H1 (cell line): ENCODE measurements at regions of chr17 and their contacts with region 1.

Region 1: GRCh38 chr17:63946440-63947367 is 14.6 kb upstream of the CD79B start:
- DNase-seq: peak in 1 of 2 experiments; percentile 85
- H3K4me3 ChIP-seq: no peak overlapping the region
- H3K27ac ChIP-seq: no peak overlapping the region
- H3K4me1 ChIP-seq: peaks cover 0 to 8% (median 1%) of the 10 kb centered on the region in 4 experiments; a peak in 3 of 7 replicates
- H3K27me3 ChIP-seq: no peaks in the 10 kb centered on the region
- CTCF ChIP-seq: peak; percentile 75 to 92 (median 81)
- EP300 ChIP-seq: no peak
- POLR2A ChIP-seq: no peak
- RAD21 ChIP-seq: peak; percentile 64 to 71

Region 2: GRCh38 chr17:63809970-63810369 is 136.7 kb before region 1 on chr17:
- CTCF ChIA-PET with region 1: no interaction called
- POLR2A ChIA-PET with region 1: no interaction called
- DNase-seq: no peak
- H3K4me3 ChIP-seq: no peak overlapping the region
- H3K27ac ChIP-seq: no peak overlapping the region
- H3K4me1 ChIP-seq: no peaks in the 10 kb centered on the region
- H3K27me3 ChIP-seq: no peaks in the 10 kb centered on the region
- CTCF ChIP-seq: no peak
- EP300 ChIP-seq: no peak
- POLR2A ChIP-seq: no peak
- RAD21 ChIP-seq: no peak

Region 3: DNA sequence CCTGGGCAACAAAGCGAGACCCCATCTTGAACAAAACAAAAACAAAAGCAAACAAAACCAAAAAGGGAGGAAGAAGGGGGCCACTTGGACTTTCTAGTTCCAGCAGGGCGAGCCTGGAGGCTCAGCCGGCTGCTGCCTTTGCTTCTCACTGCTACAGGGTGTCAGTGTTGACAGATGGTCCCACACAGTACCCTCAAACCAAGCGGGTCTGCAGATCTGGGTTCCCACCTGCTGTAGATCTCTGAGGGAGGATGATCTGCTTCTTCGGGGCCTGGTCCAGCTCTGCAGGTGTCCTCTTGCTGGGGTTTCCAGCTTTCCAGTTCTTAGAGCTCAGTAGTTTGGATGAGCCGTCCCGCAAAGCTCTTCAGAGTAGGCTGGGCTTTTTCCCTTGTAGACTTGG is 42.4 kb before region 1 on chr17:
- CTCF ChIA-PET with region 1: interaction called, 45 read pairs
- POLR2A ChIA-PET with region 1: no interaction called
- DNase-seq: no peak
- H3K4me3 ChIP-seq: no peak overlapping the region
- H3K27ac ChIP-seq: no peak overlapping the region
- H3K4me1 ChIP-seq: peaks cover 0 to 4% (median under 1%) of the 10 kb centered on the region in 4 experiments; a peak in 2 of 7 replicates
- H3K27me3 ChIP-seq: no peaks in the 10 kb centered on the region
- CTCF ChIP-seq: no peak
- EP300 ChIP-seq: no peak
- POLR2A ChIP-seq: no peak
- RAD21 ChIP-seq: no peak

Region 4: DNA sequence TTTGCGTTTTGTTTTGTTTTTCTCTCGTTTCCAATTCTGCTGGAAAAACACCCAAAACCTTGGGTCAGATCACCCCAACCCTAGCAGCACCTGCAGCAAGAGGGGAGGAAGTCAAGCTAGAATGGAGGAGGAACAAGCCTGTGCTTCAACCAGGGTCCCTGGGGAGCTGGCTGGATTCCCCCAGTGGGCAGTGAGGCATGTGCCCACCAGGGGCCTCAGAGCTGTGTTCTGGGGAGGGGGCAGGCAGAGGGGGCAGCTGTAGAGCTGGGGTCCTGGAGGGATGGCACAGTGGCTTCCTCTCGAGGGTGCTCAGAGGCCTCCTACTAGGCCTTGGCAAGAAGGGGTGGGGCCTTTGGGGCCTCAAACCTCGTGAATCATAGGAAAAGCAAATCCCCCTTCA is 21.1 kb before region 1 on chr17:
- CTCF ChIA-PET with region 1: interaction called, 270 read pairs
- POLR2A ChIA-PET with region 1: interaction called, 13 read pairs
- DNase-seq: no peak
- H3K4me3 ChIP-seq: no peak overlapping the region
- H3K27ac ChIP-seq: no peak overlapping the region
- H3K4me1 ChIP-seq: peaks cover 0 to 2% (median under 1%) of the 10 kb centered on the region in 4 experiments; a peak in 4 of 7 replicates
- H3K27me3 ChIP-seq: no peaks in the 10 kb centered on the region
- CTCF ChIP-seq: no peak
- EP300 ChIP-seq: no peak
- POLR2A ChIP-seq: no peak
- RAD21 ChIP-seq: no peak

Region 5: GRCh38 chr17:63961355-63962212 is 14.9 kb after region 1 on chr17:
- CTCF ChIA-PET with region 1: interaction called, 36 read pairs
- POLR2A ChIA-PET with region 1: interaction called, 19 read pairs
- DNase-seq: peak; percentile 100
- H3K4me3 ChIP-seq: peak overlapping the region; percentile 29 to 62 (median 50); a peak in 7 of 8 replicates
- H3K27ac ChIP-seq: peak overlapping the region; percentile 37; the same call in 1 of the 2 replicates
- H3K4me1 ChIP-seq: peaks cover 0 to 20% (median 9%) of the 10 kb centered on the region in 4 experiments; a peak in 6 of 7 replicates
- H3K27me3 ChIP-seq: no peaks in the 10 kb centered on the region
- CTCF ChIP-seq: no peak
- EP300 ChIP-seq: peak in 1 of 2 experiments; percentile 56; a peak in 1 of 3 replicates
- POLR2A ChIP-seq: peak in 1 of 2 experiments; percentile 65; a peak in 2 of 3 replicates
- RAD21 ChIP-seq: no peak

Region 6: DNA sequence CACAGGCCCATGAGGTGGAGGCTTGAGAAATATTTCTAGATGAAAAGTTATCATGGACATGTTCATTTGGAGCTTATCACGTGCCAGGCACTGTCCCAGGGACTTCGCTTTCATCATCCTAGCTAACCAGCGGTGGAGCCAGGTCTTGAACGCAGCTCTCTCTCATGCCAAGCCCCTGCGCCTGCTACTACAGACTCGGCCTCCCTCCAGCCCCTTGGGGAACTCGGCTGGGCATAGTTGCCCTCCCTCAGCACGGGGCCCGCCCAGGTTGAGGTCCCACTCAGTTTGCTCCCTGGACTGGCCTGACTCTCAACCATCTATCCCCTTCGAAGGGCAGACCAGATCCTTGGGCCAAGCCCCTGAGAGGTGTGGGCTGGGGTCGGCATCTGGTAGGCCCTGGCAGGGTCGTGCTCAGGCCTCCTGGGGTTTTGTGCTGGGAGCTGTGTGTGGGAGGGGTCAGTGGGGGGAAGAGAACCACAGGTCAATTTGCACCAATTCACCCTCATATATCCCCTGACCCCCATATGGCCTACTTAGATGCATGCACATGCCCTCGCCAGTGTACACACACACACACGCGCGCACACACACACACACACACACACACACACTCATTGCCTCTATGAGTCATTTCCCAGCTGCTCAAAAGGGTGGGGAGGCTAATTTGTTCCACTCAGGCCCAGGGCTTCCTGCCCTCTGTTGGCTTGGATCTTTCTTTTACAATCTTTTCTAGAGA is 38.1 kb after region 1 on chr17:
- CTCF ChIA-PET with region 1: interaction called, 219 read pairs
- POLR2A ChIA-PET with region 1: interaction called, 6 read pairs
- DNase-seq: no peak
- H3K4me3 ChIP-seq: no peak overlapping the region
- H3K27ac ChIP-seq: no peak overlapping the region
- H3K4me1 ChIP-seq: peaks cover 0 to 17% (median 9%) of the 10 kb centered on the region in 4 experiments; a peak in 6 of 7 replicates
- H3K27me3 ChIP-seq: no peaks in the 10 kb centered on the region; a peak in 1 of 7 replicates
- CTCF ChIP-seq: no peak
- EP300 ChIP-seq: no peak
- POLR2A ChIP-seq: no peak
- RAD21 ChIP-seq: no peak

Region 7: DNA sequence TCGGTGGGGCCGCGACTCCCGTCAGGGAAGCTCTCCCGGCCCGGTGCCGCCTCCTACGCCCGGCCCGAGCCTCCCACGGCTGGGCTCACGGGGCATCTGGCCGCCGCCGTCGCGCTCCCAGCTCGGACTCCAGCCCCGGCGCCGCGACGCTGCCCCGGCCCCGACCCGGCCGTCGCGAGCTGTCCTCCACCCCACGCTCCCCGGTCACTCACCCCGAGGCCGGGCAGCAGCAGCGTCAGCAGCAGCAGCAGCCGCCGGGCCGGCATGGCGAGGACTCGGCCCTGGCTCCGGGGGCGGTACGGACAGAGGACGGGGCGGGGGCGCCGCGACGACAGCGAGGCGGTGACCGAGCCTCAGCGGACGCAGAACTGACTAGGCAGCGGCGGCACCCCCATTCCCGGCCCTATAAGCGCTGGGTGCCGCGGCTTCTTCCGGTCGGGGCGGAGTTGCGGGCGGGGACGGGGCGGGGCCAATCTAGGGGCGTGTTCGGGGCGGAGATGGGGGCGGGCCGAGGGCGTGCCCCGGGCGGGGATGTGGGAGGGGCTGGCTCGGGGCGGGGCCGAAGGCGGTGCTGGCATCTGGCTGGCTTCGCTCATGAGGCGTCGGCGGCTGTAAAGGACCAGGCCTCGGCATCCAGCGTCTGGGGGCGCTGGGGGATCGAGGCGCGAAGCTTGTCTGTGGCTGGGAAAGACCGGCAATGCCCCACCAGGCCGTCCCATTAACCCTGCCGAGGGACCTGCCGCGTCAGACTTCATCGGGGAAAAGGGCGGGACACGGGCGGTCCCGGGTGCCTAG is 183.3 kb after region 1 on chr17 and contains the start of gene ERN1:
- CTCF ChIA-PET with region 1: interaction called, 10 read pairs
- POLR2A ChIA-PET with region 1: no interaction called
- DNase-seq: peak; percentile 81 to 91
- H3K4me3 ChIP-seq: peak within 1 kb of the TSS; percentile 69 to 79 (median 74)
- H3K27ac ChIP-seq: no peak within 1 kb of the TSS
- H3K4me1 ChIP-seq: no peaks in the 10 kb centered on the region
- H3K27me3 ChIP-seq: peaks cover 0 to 21% (median 11%) of the 10 kb centered on the region in 4 experiments; a peak in 6 of 7 replicates
- CTCF ChIP-seq: 0 out of 4 replicates have a peak, but pooled peaks of 1 of the 3 experiments have one; percentile 11
- EP300 ChIP-seq: no peak
- POLR2A ChIP-seq: peak; percentile 75 to 76
- RAD21 ChIP-seq: peak in 1 of 2 experiments; percentile 5; a peak in 1 of 4 replicates
- total RNA-seq, gene ERN1: 3.9 and 5.7 TPM in 2 replicates